ENCODE measurements at regions of chr2 and their contacts with region 1.

Region 1: DNA sequence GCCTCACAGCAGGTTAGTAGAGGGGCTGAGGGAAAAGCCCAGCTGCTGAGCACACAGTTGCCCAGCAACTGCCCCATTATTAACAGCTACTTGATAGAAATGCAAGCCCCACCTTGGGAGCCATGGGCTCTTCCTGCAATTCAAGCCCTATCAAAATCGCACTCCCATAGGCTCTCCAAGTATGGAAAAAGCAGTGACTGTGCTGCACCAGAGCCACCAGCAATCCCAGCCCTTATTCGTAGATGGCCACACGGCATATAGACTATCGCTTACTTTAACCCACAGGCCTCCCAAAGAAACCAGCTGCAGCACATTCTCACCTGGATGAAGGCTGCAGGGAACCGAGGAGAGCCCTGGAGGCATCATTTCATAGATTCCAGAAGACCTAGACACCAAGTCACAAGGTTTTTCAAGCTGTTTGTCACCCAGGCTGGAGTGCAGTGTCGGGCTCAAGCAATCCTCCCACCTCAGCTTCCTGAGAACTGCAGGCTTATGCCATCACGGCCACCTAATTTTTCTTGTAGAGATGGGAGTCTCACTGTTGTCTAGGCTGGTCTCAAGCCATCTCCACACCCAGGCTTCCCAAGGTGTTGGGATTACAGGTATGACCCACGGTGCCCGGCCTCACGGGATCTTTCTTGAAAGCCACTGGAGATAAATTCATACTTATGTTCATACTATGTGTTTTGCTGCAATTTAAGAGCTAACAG is 11.3 kb downstream of the NCL start:
- DNase-seq: peak in 1 of 2 experiments; percentile 65
- H3K4me3 ChIP-seq: no peak overlapping the region
- H3K27ac ChIP-seq: peak overlapping the region; percentile 44; the same call in 1 of the 2 replicates
- H3K4me1 ChIP-seq: peaks cover 0 to 5% (median 2%) of the 10 kb centered on the region in 4 experiments; a peak in 3 of 7 replicates
- H3K27me3 ChIP-seq: no peaks in the 10 kb centered on the region
- CTCF ChIP-seq: no peak
- EP300 ChIP-seq: no peak
- POLR2A ChIP-seq: peak; percentile 52 to 83; a peak in 2 of 3 replicates
- RAD21 ChIP-seq: no peak

Region 2: DNA sequence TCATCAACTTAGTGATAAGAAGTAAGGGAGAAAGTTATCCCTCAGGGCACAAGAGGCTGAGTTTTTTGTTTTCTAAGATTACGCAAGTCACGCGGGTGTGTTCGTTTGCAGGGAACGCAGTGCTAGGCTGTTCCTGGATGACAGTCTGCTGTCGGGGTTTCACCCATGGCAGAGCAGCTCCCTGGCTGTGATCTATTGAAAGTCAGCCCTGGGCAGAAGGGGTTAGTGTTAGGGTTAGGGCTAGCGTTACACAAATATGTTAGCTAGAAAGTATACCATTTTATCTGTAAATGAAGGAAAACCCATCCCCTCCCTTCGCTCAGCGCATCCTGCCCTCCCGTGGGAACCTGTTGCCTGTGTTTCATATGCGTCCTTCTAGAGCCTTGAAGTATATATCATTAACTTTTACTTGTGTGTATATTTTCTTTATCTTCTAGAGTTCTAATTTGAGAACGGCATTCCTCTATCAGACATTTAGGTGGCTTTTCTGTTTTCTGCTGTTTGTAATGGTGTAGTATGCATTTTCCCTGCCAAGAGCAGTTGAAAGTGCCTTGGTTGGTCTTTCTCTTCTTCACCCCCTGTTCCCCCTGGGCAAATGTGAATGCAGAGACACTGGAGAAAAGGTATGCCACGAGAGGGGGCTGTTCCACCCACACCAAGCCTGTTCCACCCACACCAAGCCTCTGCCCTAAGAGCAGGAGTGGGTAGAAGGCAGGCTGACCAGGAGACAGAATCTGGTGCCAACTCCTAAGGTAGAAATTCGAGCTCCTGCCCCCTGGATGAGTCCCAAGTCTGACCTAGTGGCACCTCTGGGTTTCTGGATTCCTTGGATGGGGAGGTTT is 207.5 kb before region 1 on chr2:
- CTCF ChIA-PET with region 1: interaction called, 3 read pairs
- POLR2A ChIA-PET with region 1: interaction called, 13 read pairs
- DNase-seq: no peak
- H3K4me3 ChIP-seq: no peak overlapping the region
- H3K27ac ChIP-seq: no peak overlapping the region
- H3K4me1 ChIP-seq: peaks cover 0 to 3% (median 0%) of the 10 kb centered on the region in 4 experiments; a peak in 2 of 7 replicates
- H3K27me3 ChIP-seq: no peaks in the 10 kb centered on the region
- CTCF ChIP-seq: peak in 2 of 3 experiments; percentile 8 to 21; a peak in 2 of 4 replicates
- EP300 ChIP-seq: no peak
- POLR2A ChIP-seq: no peak
- RAD21 ChIP-seq: peak in 1 of 2 experiments; percentile 17; a peak in 1 of 4 replicates

Region 3: DNA sequence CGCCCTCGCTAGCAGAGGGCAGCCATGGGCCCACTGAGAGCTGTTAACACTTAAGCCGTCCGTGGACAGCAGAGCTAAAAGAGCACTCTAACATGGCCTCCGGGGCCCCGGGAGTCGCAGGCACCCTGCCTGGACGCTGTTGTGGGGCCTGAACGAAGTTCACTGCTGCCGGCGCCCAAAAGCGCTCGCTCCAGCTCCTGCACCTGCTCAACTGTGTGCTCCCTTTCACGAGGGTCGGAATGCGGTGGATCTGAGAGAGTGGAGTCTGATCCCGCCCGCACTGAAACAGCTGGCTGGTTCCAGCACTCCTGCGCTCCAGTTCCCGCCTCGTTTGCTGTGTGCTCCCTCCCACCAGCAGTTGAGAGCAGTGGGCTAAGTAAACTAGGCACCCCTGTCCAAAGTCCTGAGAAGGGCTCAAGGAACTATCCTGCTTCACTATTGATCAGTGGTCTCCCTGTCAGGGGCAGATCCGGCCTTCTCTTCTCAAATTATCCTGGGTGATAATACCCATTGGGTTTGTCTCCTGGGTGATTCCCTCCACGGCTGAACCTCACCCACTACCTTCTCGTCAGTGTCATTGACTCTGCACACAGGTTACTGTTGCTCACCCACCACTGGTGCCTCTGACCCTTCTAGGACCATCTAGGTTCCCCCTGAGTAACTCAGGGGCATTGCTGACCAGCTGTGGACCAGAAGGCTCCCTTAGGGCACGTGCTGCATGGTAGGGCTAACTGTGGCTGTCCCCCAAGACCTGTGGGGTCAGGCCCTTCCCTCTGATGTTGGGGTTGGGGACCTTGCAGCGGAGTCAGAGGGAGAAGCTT is 33.9 kb before region 1 on chr2:
- CTCF ChIA-PET with region 1: interaction called, 122 read pairs
- POLR2A ChIA-PET with region 1: interaction called, 235 read pairs
- DNase-seq: no peak
- H3K4me3 ChIP-seq: no peak overlapping the region
- H3K27ac ChIP-seq: no peak overlapping the region
- H3K4me1 ChIP-seq: peaks cover 1 to 6% (median 4%) of the 10 kb centered on the region in 4 experiments; a peak in 6 of 7 replicates
- H3K27me3 ChIP-seq: no peaks in the 10 kb centered on the region
- CTCF ChIP-seq: no peak
- EP300 ChIP-seq: no peak
- POLR2A ChIP-seq: no peak
- RAD21 ChIP-seq: no peak

Region 4: GRCh38 chr2:231431606-231432005 is 21.3 kb before region 1 on chr2:
- CTCF ChIA-PET with region 1: interaction called, 4 read pairs
- POLR2A ChIA-PET with region 1: interaction called, 97 read pairs
- DNase-seq: no peak
- H3K4me3 ChIP-seq: no peak overlapping the region
- H3K27ac ChIP-seq: no peak overlapping the region
- H3K4me1 ChIP-seq: peaks cover 0 to 3% (median 0%) of the 10 kb centered on the region in 4 experiments; a peak in 1 of 7 replicates
- H3K27me3 ChIP-seq: no peaks in the 10 kb centered on the region
- CTCF ChIP-seq: no peak
- EP300 ChIP-seq: peak in 1 of 2 experiments; percentile 88; a peak in 1 of 3 replicates
- POLR2A ChIP-seq: no peak
- RAD21 ChIP-seq: no peak

Region 5: DNA sequence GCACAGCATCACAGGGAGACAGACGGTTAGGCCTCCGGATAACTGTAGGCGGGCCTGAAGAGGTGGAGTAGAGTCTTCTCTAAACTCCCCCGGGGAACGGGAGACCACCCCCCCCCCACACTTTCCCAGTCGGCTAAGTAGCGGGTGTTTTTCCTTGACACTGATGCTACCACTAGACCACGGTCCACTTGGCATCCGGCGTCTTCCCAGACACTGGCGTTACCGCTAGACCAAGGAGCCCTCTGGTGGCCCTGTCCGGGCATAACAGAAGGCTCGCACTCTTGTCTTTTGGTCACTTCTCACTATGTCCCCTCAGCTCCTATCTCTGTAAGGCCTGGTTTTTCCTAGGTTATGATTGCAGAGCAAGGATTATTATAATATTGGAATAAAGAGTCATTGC is 37.0 kb after region 1 on chr2:
- CTCF ChIA-PET with region 1: interaction called, 7 read pairs
- POLR2A ChIA-PET with region 1: interaction called, 364 read pairs
- DNase-seq: peak in 1 of 2 experiments; percentile 82
- H3K4me3 ChIP-seq: no peak overlapping the region
- H3K27ac ChIP-seq: no peak overlapping the region
- H3K4me1 ChIP-seq: no peaks in the 10 kb centered on the region
- H3K27me3 ChIP-seq: no peaks in the 10 kb centered on the region
- CTCF ChIP-seq: peak; percentile 56 to 60 (median 58)
- EP300 ChIP-seq: no peak
- POLR2A ChIP-seq: no peak
- RAD21 ChIP-seq: peak; percentile 58 to 67

Region 6: GRCh38 chr2:231523451-231524285 is 70.7 kb after region 1 on chr2:
- CTCF ChIA-PET with region 1: no interaction called
- POLR2A ChIA-PET with region 1: no interaction called
- DNase-seq: no peak
- H3K4me3 ChIP-seq: no peak overlapping the region
- H3K27ac ChIP-seq: no peak overlapping the region
- H3K4me1 ChIP-seq: peaks cover 0 to 4% (median 2%) of the 10 kb centered on the region in 4 experiments; a peak in 1 of 7 replicates
- H3K27me3 ChIP-seq: no peaks in the 10 kb centered on the region; a peak in 1 of 7 replicates
- CTCF ChIP-seq: no peak
- EP300 ChIP-seq: no peak
- POLR2A ChIP-seq: no peak
- RAD21 ChIP-seq: no peak

Region 7: DNA sequence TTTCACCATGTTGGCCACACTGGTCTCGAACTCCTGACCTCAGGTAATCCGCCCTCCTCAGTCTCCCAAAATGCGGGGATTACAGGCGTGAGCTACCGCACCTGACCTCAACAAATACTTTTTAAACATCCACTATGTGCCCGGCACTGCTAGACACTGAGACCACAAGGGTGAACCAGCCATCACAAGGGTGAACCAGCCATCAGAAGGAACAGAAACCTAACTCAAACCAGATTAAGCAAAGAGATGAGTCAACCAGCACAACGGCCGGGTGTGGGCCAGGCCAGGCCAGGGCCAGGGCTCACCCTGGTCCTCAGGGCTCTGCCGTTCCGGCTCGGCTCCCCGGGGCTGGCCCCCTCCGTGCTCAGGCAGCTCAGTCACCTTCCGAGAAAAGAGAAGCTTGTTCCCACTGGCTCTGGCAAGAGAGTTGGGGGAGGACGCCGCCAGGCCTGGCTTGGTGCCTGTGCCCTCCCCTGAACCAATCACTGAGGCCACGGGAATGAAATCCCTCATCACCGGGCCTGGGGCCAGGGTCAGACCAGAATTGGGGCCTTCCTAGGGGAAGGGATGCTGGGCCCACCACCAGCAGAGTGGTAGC is 144.2 kb after region 1 on chr2:
- CTCF ChIA-PET with region 1: no interaction called
- POLR2A ChIA-PET with region 1: no interaction called
- DNase-seq: no peak
- H3K4me3 ChIP-seq: no peak overlapping the region
- H3K27ac ChIP-seq: no peak overlapping the region
- H3K4me1 ChIP-seq: peaks cover 0 to 7% (median 6%) of the 10 kb centered on the region in 4 experiments; a peak in 4 of 7 replicates
- H3K27me3 ChIP-seq: no peaks in the 10 kb centered on the region
- CTCF ChIP-seq: no peak
- EP300 ChIP-seq: no peak
- POLR2A ChIP-seq: no peak
- RAD21 ChIP-seq: no peak

Region 8: GRCh38 chr2:231745303-231746038 is 292.5 kb after region 1 on chr2:
- CTCF ChIA-PET with region 1: no interaction called
- POLR2A ChIA-PET with region 1: no interaction called
- DNase-seq: peak in 1 of 2 experiments; percentile 3
- H3K4me3 ChIP-seq: peak overlapping the region in 1 of 4 experiments; percentile 31; a peak in 1 of 8 replicates
- H3K27ac ChIP-seq: no peak overlapping the region
- H3K4me1 ChIP-seq: peaks cover 4 to 11% (median 7%) of the 10 kb centered on the region in 4 experiments; a peak in 4 of 7 replicates
- H3K27me3 ChIP-seq: no peaks in the 10 kb centered on the region
- CTCF ChIP-seq: no peak
- EP300 ChIP-seq: no peak
- POLR2A ChIP-seq: no peak
- RAD21 ChIP-seq: no peak